CD4-positive, alpha-beta memory T cell (primary cell): ENCODE measurements at regions of chr7 and their contacts with region 1.

Region 1: GRCh38 chr7:98280791-98281756 is at the start of gene BRI3:
- DNase-seq: peak; percentile 82 to 91 (median 84)
- H3K4me3 ChIP-seq: peak within 1 kb of the TSS; percentile 73 to 81
- H3K4me3 Mint-ChIP-seq: peak within 1 kb of the TSS; percentile 86 to 93 (median 88)
- H3K27ac ChIP-seq: peak within 1 kb of the TSS; percentile 74
- H3K27ac Mint-ChIP-seq: peak within 1 kb of the TSS; percentile 77 to 92 (median 90)
- H3K4me1 ChIP-seq: peaks cover 43% of the 10 kb centered on the region
- H3K4me1 Mint-ChIP-seq: peaks cover 10 to 36% (median 27%) of the 10 kb centered on the region in 4 donors
- H3K27me3 ChIP-seq: no peaks in the 10 kb centered on the region
- H3K27me3 Mint-ChIP-seq: no peaks in the 10 kb centered on the region
- total RNA-seq, gene BRI3: 73.8 to 80.4 TPM

Region 2: DNA sequence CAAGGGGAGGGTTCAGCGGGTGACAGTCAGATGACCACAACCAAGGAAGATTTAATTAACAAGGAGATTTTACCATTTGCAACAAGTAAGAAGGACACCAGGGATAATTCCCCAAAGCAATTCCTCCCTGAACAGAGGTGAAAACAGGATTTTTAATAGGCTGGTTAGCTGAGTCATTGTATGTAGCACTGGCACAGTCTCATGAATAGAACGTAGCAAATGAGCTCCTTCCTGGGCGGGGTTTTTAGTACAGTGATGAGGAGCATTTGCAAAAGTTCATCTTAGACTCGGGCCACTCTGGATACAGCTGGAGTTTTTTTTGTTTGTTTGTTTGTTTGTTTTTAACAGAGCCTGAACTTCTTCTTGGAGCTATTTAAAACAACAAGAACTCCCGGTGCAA is 510.2 kb before region 1 on chr7:
- CTCF ChIA-PET with region 1: no interaction called
- POLR2A ChIA-PET with region 1: no interaction called
- intact Hi-C with region 1: no loop called
- DNase-seq: no peak
- H3K4me3 ChIP-seq: no peak overlapping the region
- H3K4me3 Mint-ChIP-seq: no peak overlapping the region
- H3K27ac ChIP-seq: no peak overlapping the region
- H3K27ac Mint-ChIP-seq: no peak overlapping the region
- H3K4me1 ChIP-seq: no peaks in the 10 kb centered on the region
- H3K4me1 Mint-ChIP-seq: no peaks in the 10 kb centered on the region
- H3K27me3 ChIP-seq: no peaks in the 10 kb centered on the region
- H3K27me3 Mint-ChIP-seq: peaks cover 0 to 2% of the 10 kb centered on the region in 2 donors

Region 3: GRCh38 chr7:97872025-97872669 is 408.9 kb before region 1 on chr7 and contains the start of gene ASNS:
- CTCF ChIA-PET with region 1: no interaction called
- POLR2A ChIA-PET with region 1: no interaction called
- intact Hi-C with region 1: loop called (anchors 10 kb)
- DNase-seq: peak; percentile 80 to 88 (median 85)
- H3K4me3 ChIP-seq: peak within 1 kb of the TSS; percentile 75 to 78
- H3K4me3 Mint-ChIP-seq: peak within 1 kb of the TSS; percentile 85 to 93 (median 90)
- H3K27ac ChIP-seq: peak within 1 kb of the TSS; percentile 46
- H3K27ac Mint-ChIP-seq: peak within 1 kb of the TSS; percentile 84 to 95 (median 92)
- H3K4me1 ChIP-seq: peaks cover 20% of the 10 kb centered on the region
- H3K4me1 Mint-ChIP-seq: peaks cover 9 to 19% (median 12%) of the 10 kb centered on the region in 4 donors
- H3K27me3 ChIP-seq: no peaks in the 10 kb centered on the region
- H3K27me3 Mint-ChIP-seq: no peaks in the 10 kb centered on the region
- total RNA-seq, gene ASNS: 36.6 to 37.9 TPM

Region 4: GRCh38 chr7:97971990-97972943 is 308.8 kb before region 1 on chr7:
- CTCF ChIA-PET with region 1: no interaction called
- POLR2A ChIA-PET with region 1: no interaction called
- intact Hi-C with region 1: loop called (anchors 1 kb)
- DNase-seq: peak; percentile 81 to 85 (median 83)
- H3K4me3 ChIP-seq: peak overlapping the region; percentile 91 to 93
- H3K4me3 Mint-ChIP-seq: peak overlapping the region; percentile 93 to 98 (median 96)
- H3K27ac ChIP-seq: peak overlapping the region; percentile 65
- H3K27ac Mint-ChIP-seq: peak overlapping the region; percentile 86 to 96 (median 95)
- H3K4me1 ChIP-seq: peaks cover 15% of the 10 kb centered on the region
- H3K4me1 Mint-ChIP-seq: peaks cover 10 to 35% (median 19%) of the 10 kb centered on the region in 4 donors
- H3K27me3 ChIP-seq: no peaks in the 10 kb centered on the region
- H3K27me3 Mint-ChIP-seq: no peaks in the 10 kb centered on the region

Region 5: DNA sequence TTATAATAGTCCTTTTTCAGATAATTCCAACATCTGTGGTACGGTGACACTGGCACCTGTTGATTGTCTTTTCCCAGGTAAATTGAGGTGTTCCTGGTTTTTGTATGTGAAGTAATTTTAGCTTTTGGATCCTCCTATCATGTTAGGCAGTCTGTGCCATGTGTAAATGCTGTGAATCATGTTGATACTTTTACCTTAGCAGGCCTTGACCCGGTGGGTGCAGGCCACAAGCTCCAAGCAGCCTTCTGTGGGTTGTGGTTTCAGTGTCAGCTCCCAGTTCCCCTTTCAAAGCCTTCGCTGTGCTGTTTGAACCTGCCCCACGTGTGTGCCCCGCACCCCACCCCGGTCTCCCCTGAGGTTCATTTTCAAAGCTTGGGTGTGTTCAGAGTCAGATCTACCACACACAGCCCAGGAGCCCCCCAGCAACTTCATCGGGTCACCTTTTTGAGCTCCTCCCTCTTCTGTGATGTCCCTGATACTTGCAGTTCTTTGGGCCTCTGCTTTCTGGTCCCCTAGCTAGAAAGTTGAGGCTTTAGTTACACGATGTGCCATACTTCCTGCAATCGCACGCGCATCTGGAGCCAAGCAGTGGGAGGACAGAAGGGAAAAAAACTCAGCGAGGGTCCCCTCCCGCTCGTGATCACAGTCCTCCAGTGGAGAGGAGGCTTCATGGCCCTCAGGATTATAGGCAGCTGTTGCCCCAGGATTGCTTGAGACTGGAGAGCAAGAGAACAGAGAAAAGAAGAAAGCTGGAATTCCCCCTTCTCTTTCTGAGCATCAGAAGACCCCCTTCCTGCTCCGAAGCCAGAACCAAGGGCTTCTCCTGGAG is 78.5 kb before region 1 on chr7:
- CTCF ChIA-PET with region 1: no interaction called
- POLR2A ChIA-PET with region 1: no interaction called
- intact Hi-C with region 1: loop called (anchors 2 kb)
- DNase-seq: peak; percentile 56 to 72 (median 66)
- H3K4me3 ChIP-seq: peak overlapping the region in 1 of 2 donors; percentile 14
- H3K4me3 Mint-ChIP-seq: peak overlapping the region; percentile 57 to 82 (median 76)
- H3K27ac ChIP-seq: peak overlapping the region; percentile 2
- H3K27ac Mint-ChIP-seq: peak overlapping the region; percentile 43 to 93 (median 88)
- H3K4me1 ChIP-seq: peaks cover 44% of the 10 kb centered on the region
- H3K4me1 Mint-ChIP-seq: peaks cover 25 to 53% (median 40%) of the 10 kb centered on the region in 4 donors
- H3K27me3 ChIP-seq: no peaks in the 10 kb centered on the region
- H3K27me3 Mint-ChIP-seq: no peaks in the 10 kb centered on the region

Region 6: GRCh38 chr7:98878365-98879165 is 597.5 kb after region 1 on chr7 and contains the start of gene TRRAP:
- CTCF ChIA-PET with region 1: no interaction called
- POLR2A ChIA-PET with region 1: no interaction called
- intact Hi-C with region 1: loop called (anchors 1 kb)
- DNase-seq: peak; percentile 74 to 84 (median 82)
- H3K4me3 ChIP-seq: peak within 1 kb of the TSS; percentile 99 to 100
- H3K4me3 Mint-ChIP-seq: peak within 1 kb of the TSS; percentile 91 to 99 (median 97)
- H3K27ac ChIP-seq: peak within 1 kb of the TSS; percentile 92
- H3K27ac Mint-ChIP-seq: peak within 1 kb of the TSS; percentile 94 to 98 (median 97)
- H3K4me1 ChIP-seq: peaks cover 39% of the 10 kb centered on the region
- H3K4me1 Mint-ChIP-seq: peaks cover 11 to 42% (median 23%) of the 10 kb centered on the region in 4 donors
- H3K27me3 ChIP-seq: no peaks in the 10 kb centered on the region
- H3K27me3 Mint-ChIP-seq: peaks cover 0 to 3% of the 10 kb centered on the region in 2 donors
- total RNA-seq, gene TRRAP: 83.3 to 89.9 TPM